ENCODE measurements at regions of chr7 and their contacts with region 1.

Region 1: GRCh38 chr7:22885797-22886261 is 63.2 kb upstream of the TOMM7 start:
- DNase-seq: peak; percentile 88
- H3K4me3 Mint-ChIP-seq: peak overlapping the region; percentile 64
- H3K27ac Mint-ChIP-seq: peak overlapping the region; percentile 98
- H3K4me1 Mint-ChIP-seq: peaks cover 54% of the 10 kb centered on the region
- H3K27me3 Mint-ChIP-seq: no peaks in the 10 kb centered on the region

Region 2: GRCh38 chr7:22697876-22698606 is 187.8 kb before region 1 on chr7:
- CTCF ChIA-PET with region 1: no interaction called
- intact Hi-C with region 1: loop called (anchors 1 kb)
- DNase-seq: peak; percentile 59
- H3K4me3 Mint-ChIP-seq: no peak overlapping the region
- H3K27ac Mint-ChIP-seq: peak overlapping the region; percentile 84
- H3K4me1 Mint-ChIP-seq: peaks cover 67% of the 10 kb centered on the region
- H3K27me3 Mint-ChIP-seq: no peaks in the 10 kb centered on the region

Region 3: DNA sequence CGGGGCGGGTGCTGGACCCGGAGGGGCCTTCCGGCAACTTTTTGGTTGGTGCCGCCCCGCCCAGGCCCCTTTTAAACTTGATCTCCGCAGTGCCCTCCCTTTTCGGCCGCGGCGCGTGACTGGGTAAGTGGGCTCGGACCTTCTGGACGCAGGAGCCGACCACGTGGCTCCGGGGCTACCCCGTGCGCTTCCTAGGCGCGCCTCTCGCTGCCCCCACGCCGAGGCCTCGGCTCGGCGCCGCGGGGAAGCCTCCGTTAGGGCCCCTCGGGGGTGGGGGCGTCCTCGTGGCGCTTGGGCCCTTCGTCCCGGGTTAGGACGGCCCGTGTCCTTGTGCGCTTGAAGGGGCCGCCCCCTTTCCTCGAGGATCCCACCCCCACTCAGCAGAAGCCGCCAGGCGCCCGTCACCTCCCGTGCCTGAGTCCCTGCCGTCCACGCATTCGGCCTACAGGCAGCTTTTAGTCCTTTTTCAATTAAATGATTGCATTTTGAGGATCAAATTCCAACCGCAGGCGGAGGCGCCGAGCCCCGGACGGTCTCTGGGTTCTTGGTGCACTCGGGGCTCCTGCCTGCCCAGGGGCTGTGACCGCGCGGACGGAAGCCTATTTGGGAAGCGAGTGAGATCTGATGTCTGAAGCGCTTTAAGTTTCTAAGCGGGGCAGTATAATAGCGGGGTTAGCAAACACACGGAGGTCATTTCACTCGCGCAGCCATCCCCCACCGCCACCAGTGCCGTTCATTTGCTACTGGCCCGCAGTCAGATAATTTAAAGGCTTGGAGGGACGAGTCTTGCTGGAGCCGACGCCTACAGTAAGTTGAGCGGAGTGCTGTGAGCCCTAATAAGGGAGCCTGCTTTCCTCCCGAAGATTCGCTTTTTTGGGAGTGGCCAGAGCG is 31.4 kb before region 1 on chr7:
- CTCF ChIA-PET with region 1: interaction called, 12 read pairs
- intact Hi-C with region 1: loop called (anchors 1 kb)
- DNase-seq: peak; percentile 78
- H3K4me3 Mint-ChIP-seq: peak overlapping the region; percentile 87
- H3K27ac Mint-ChIP-seq: peak overlapping the region; percentile 94
- H3K4me1 Mint-ChIP-seq: peaks cover 32% of the 10 kb centered on the region
- H3K27me3 Mint-ChIP-seq: peaks cover 3% of the 10 kb centered on the region

Region 4: DNA sequence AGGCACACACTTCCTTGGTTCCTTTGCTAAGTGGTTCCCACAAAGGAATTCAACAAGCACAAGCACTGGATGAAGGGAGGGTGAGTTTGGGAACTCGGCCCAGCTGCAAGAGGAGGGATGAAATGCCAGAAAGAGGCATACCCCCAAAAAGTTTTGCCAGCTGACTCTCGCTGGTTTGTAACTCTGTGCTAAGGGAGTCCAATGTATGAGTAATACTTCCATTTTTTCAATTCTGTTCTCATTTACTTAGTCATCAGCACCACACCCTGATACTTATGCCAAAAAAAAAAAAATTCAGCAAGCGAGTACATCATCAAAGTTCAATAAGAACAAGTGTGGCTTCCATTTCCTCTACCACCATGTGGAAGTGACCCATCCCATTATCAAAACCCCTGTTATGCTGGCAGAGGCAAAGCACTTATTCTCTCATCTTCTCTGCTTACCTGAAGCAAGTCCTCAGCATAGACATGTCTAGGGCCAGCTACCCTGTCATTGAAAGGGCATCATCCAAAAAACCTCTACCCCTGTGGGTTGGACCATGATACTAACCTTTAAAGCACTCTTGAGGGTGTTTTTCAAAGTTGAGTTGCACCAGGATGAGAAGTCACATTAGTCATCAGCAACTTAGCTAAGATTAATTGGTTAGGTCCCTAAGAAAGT is 135.0 kb after region 1 on chr7:
- CTCF ChIA-PET with region 1: no interaction called
- intact Hi-C with region 1: loop called (anchors 1 kb)
- DNase-seq: peak; percentile 43
- H3K4me3 Mint-ChIP-seq: no peak overlapping the region
- H3K27ac Mint-ChIP-seq: peak overlapping the region; percentile 72
- H3K4me1 Mint-ChIP-seq: peaks cover 25% of the 10 kb centered on the region
- H3K27me3 Mint-ChIP-seq: peaks cover 9% of the 10 kb centered on the region

Region 5: DNA sequence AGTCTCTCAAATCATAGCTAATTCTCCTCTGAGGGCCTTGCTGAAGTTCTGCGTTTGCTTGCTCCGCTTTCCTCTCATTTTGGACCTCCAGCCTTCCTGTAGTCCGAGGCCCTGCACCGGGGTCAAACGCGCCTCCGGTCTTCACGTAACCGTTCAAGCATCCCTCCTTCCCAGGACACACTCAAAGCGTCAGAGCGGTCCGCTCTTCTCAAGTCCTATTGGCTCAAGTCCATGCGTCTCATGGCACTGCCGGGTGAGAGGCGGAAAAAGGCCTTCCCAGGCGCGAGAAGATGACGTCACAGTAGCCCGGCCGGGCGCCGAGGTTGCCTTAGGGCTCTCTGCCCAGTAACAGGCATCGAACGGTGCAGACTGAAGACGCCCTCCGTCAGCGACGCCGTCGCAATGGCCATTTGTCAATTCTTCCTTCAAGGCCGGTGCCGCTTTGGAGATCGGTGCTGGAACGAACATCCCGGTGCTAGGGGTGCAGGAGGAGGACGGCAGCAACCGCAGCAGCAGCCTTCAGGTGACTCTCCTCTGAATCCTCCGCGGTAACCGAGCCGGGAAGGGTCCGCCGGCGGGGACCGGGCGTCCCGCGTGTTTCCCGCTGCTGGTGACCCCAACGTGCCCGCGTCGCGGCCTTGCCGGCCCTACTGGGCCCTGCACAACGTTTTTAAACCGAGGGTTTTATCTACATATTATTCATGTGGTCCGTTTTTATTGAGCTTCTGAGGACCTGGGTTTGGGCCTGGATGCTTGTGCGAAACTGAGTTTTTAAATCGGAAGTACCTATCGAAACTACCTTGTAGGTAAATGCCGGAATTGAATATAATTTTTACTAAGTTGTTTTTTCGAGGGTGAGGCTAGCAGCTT is 296.1 kb after region 1 on chr7 and contains the start of gene NUP42:
- CTCF ChIA-PET with region 1: no interaction called
- intact Hi-C with region 1: loop called (anchors 1 kb)
- DNase-seq: peak; percentile 98
- H3K4me3 Mint-ChIP-seq: peak within 1 kb of the TSS; percentile 99
- H3K27ac Mint-ChIP-seq: peak within 1 kb of the TSS; percentile 99
- H3K4me1 Mint-ChIP-seq: peaks cover 35% of the 10 kb centered on the region
- H3K27me3 Mint-ChIP-seq: no peaks in the 10 kb centered on the region
- total RNA-seq, gene NUP42: 15.2 to 17.0 TPM

Measured in activated naive CD4-positive, alpha-beta T cell treated with anti-CD3 and anti-CD28 coated beads for 36 hours (primary cell).